IMR-90 (cell line): ENCODE measurements at regions of chr13 and their contacts with region 1.

Region 1: DNA sequence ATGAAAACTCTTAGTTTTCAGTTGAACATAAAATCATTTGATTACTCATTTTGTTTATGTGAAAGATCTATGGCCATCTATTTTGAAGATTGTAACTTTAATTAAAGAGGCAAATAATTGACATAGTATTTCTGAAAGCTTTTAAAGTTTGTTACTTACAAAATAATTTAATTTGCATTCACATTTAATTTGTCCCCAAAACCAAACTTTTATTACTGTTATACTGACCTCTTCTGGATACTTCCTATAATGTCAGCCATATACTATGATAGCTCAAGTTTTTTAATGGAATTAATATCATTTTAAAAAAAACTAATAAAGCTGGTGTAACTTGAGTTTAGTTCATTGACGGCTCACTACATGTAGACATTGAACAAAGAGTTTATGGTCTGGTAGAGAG is 4.9 kb upstream of the SGCG start:
- DNase-seq: peak; percentile 11
- ATAC-seq: peak; percentile 62; the same call in 1 of the 2 replicates
- H3K4me3 ChIP-seq: no peak overlapping the region
- H3K27ac ChIP-seq: no peak overlapping the region
- H3K4me1 ChIP-seq: no peaks in the 10 kb centered on the region
- H3K27me3 ChIP-seq: 0 out of 2 replicates have a peak, but pooled peaks cover 2% of the 10 kb centered on the region
- CTCF ChIP-seq: peak; percentile 46
- POLR2A ChIP-seq: no peak
- RAD21 ChIP-seq: peak; percentile 12; the same call in 1 of the 2 replicates

Region 2: DNA sequence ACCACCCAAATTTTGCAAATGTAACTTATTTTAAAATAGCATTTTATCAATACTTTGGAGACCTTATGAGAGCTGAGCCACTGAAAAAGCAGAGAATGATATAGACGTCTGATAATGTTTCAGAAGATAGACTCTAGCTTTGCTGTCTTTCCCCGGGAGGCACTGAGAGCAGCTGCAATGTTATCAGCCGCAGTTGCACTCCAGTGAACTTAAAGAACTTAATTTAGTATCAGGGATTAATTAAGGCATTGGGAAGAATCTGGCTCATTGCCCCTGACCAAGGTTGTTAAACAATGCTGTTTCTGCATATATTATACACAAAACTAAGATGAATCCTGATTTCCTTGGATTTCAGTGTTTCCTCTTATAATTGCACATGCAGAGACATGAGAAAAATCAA is 70.9 kb before region 1 on chr13:
- CTCF ChIA-PET with region 1: no interaction called
- POLR2A ChIA-PET with region 1: no interaction called
- dilution Hi-C with region 1: no loop called
- in situ Hi-C with region 1: no loop called
- intact Hi-C with region 1: no loop called
- DNase-seq: no peak
- ATAC-seq: no peak
- H3K4me3 ChIP-seq: no peak overlapping the region
- H3K27ac ChIP-seq: no peak overlapping the region
- H3K4me1 ChIP-seq: no peaks in the 10 kb centered on the region
- H3K27me3 ChIP-seq: peaks cover 2% of the 10 kb centered on the region; the same call in 1 of the 2 replicates
- CTCF ChIP-seq: no peak
- POLR2A ChIP-seq: no peak
- RAD21 ChIP-seq: no peak

Region 3: DNA sequence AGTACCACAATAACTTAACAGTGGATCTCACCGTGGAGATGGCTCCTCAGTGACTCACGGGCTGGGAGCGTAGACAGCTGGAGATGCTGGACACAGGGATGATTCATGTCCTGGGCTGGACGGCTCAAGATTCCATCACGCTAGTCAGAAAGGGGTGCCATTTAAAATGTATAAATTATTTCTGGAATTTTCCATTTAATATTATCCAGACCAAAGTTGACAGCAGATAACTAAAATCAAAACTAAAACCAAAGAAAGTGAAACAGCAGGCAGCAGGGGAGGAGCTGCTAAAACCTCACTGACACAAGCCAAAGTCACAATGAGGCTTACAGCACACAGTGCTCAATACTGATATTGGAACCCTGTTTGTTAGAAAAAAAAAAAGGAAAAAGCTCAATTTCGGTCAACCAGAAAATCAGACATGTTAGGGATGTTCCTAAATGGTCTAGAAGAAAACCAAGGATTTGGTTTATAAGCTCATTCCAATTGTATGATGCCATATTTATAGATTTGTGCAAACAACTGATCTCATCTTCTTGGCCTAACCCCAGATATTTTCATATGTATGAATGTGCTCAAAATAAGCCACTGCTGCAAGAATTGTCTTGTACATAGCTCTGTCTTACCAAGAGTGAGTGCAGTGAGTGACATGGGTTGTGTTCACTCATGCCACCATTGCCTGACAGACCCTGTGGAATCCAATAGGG is 145.8 kb after region 1 on chr13:
- CTCF ChIA-PET with region 1: interaction called, 4 read pairs
- POLR2A ChIA-PET with region 1: no interaction called
- dilution Hi-C with region 1: no loop called
- in situ Hi-C with region 1: no loop called
- intact Hi-C with region 1: loop called (anchors 1 kb)
- DNase-seq: peak; percentile 94
- ATAC-seq: peak; percentile 82
- H3K4me3 ChIP-seq: peak overlapping the region; percentile 32; the same call in 1 of the 2 replicates
- H3K27ac ChIP-seq: peak overlapping the region; percentile 97
- H3K4me1 ChIP-seq: peaks cover 20% of the 10 kb centered on the region
- H3K27me3 ChIP-seq: no peaks in the 10 kb centered on the region
- CTCF ChIP-seq: no peak
- POLR2A ChIP-seq: peak; percentile 36; the same call in 1 of the 2 replicates
- RAD21 ChIP-seq: no peak